GM12878 (cell line): ENCODE measurements at regions of chr17 and their contacts with region 1.

Region 1: DNA sequence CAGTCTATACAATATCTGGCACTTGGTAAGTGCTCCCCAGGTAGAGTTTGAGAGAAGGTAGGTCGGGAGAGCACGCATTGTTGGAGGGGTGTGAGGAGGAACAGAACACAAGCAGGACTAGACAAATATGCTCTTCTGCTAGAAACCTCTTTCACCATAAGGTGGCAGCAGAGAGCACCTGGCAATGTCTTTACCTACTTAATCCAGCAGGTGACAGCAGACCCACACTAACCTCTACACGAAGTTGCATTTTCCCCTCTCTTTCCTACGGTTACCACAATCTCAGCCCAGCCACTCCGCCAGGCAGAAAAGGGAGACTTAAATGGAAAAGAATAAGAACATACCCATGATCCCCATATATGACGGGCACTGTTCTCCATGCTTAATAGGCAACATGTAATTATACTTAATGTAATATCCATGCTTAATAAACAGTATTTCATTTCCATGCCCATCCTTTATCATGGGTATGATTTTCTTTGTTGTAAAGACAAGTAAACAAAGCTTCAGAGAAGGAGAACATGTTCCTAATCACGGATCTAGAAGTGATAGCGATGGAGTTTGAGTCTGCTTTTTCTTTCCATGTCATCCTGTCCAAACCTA is 55.1 kb upstream of the CCL2 start:
- DNase-seq: peak; percentile 36
- ATAC-seq: peak; percentile 91
- H3K4me3 ChIP-seq: no peak overlapping the region
- H3K27ac ChIP-seq: no peak overlapping the region
- H3K4me1 ChIP-seq: no peaks in the 10 kb centered on the region
- H3K27me3 ChIP-seq: no peaks in the 10 kb centered on the region; a peak in 1 of 4 replicates
- CTCF ChIP-seq: peak; percentile 100; a peak in 5 of 6 replicates
- EP300 ChIP-seq: no peak
- POLR2A ChIP-seq: no peak
- RAD21 ChIP-seq: peak; percentile 97

Region 2: GRCh38 chr17:33811004-33811760 is 388.9 kb before region 1 on chr17:
- CTCF ChIA-PET with region 1: no interaction called
- POLR2A ChIA-PET with region 1: no interaction called
- RAD21 ChIA-PET with region 1: no interaction called
- SMC1A ChIA-PET with region 1: no interaction called
- in situ Hi-C with region 1: no loop called
- intact Hi-C with region 1: no loop called
- DNase-seq: no peak
- ATAC-seq: no peak
- H3K4me3 ChIP-seq: no peak overlapping the region
- H3K27ac ChIP-seq: no peak overlapping the region
- H3K4me1 ChIP-seq: no peaks in the 10 kb centered on the region
- H3K27me3 ChIP-seq: no peaks in the 10 kb centered on the region
- CTCF ChIP-seq: no peak
- EP300 ChIP-seq: no peak
- POLR2A ChIP-seq: no peak
- RAD21 ChIP-seq: no peak

Region 3: GRCh38 chr17:34146440-34147043 is 53.5 kb before region 1 on chr17:
- CTCF ChIA-PET with region 1: no interaction called
- POLR2A ChIA-PET with region 1: no interaction called
- RAD21 ChIA-PET with region 1: no interaction called
- SMC1A ChIA-PET with region 1: no interaction called
- in situ Hi-C with region 1: no loop called
- intact Hi-C with region 1: no loop called
- DNase-seq: no peak
- ATAC-seq: peak; percentile 87
- H3K4me3 ChIP-seq: no peak overlapping the region
- H3K27ac ChIP-seq: no peak overlapping the region
- H3K4me1 ChIP-seq: no peaks in the 10 kb centered on the region
- H3K27me3 ChIP-seq: no peaks in the 10 kb centered on the region
- CTCF ChIP-seq: peak; percentile 85 to 87 (median 87); a peak in 5 of 6 replicates
- EP300 ChIP-seq: no peak
- POLR2A ChIP-seq: no peak
- RAD21 ChIP-seq: peak; percentile 88

Region 4: DNA sequence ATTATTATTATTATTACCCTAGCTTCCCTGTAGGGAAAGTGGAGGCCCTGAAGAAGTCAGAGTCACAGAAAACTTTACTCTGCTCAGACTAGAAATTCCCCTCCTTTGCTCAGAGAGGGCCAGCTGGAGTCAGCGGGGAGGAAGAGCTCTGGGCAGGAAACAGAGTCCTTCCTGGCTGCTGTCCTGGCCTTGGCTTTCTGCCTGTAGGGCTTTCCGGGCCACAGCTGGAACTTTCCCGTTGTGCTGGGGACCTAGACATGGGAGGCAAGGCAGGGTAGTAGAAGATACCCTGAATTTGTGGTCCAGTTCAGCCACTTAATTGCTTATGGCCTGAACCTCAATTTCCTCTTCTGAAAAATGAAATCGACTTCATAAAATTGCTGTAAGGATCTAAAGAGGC is 41.0 kb after region 1 on chr17:
- CTCF ChIA-PET with region 1: interaction called, 4 read pairs
- POLR2A ChIA-PET with region 1: no interaction called
- RAD21 ChIA-PET with region 1: no interaction called
- SMC1A ChIA-PET with region 1: no interaction called
- in situ Hi-C with region 1: no loop called
- intact Hi-C with region 1: loop called (anchors 5 kb)
- DNase-seq: no peak
- ATAC-seq: no peak; the same call in 2 of the 3 replicates
- H3K4me3 ChIP-seq: no peak overlapping the region
- H3K27ac ChIP-seq: no peak overlapping the region
- H3K4me1 ChIP-seq: peaks cover 23% of the 10 kb centered on the region
- H3K27me3 ChIP-seq: no peaks in the 10 kb centered on the region
- CTCF ChIP-seq: no peak
- EP300 ChIP-seq: no peak
- POLR2A ChIP-seq: no peak
- RAD21 ChIP-seq: no peak

Region 5: GRCh38 chr17:34354637-34355036 is 154.6 kb after region 1 on chr17:
- CTCF ChIA-PET with region 1: interaction called, 264 read pairs
- POLR2A ChIA-PET with region 1: no interaction called
- RAD21 ChIA-PET with region 1: interaction called, 83 read pairs
- SMC1A ChIA-PET with region 1: interaction called, 80 read pairs
- in situ Hi-C with region 1: no loop called
- intact Hi-C with region 1: no loop called
- DNase-seq: no peak
- ATAC-seq: no peak
- H3K4me3 ChIP-seq: no peak overlapping the region
- H3K27ac ChIP-seq: no peak overlapping the region
- H3K4me1 ChIP-seq: no peaks in the 10 kb centered on the region
- H3K27me3 ChIP-seq: peaks cover 0 to 5% of the 10 kb centered on the region in 2 experiments; a peak in 1 of 4 replicates
- CTCF ChIP-seq: no peak
- EP300 ChIP-seq: no peak
- POLR2A ChIP-seq: no peak
- RAD21 ChIP-seq: no peak

Region 6: GRCh38 chr17:34398990-34399389 is 199.0 kb after region 1 on chr17:
- CTCF ChIA-PET with region 1: interaction called, 10 read pairs
- POLR2A ChIA-PET with region 1: no interaction called
- RAD21 ChIA-PET with region 1: no interaction called
- SMC1A ChIA-PET with region 1: no interaction called
- in situ Hi-C with region 1: no loop called
- intact Hi-C with region 1: no loop called
- DNase-seq: no peak
- ATAC-seq: peak; percentile 70
- H3K4me3 ChIP-seq: no peak overlapping the region
- H3K27ac ChIP-seq: no peak overlapping the region
- H3K4me1 ChIP-seq: no peaks in the 10 kb centered on the region
- H3K27me3 ChIP-seq: peaks cover 0 to 3% of the 10 kb centered on the region in 2 experiments; a peak in 2 of 4 replicates
- CTCF ChIP-seq: no peak
- EP300 ChIP-seq: no peak
- POLR2A ChIP-seq: no peak
- RAD21 ChIP-seq: no peak

Region 7: DNA sequence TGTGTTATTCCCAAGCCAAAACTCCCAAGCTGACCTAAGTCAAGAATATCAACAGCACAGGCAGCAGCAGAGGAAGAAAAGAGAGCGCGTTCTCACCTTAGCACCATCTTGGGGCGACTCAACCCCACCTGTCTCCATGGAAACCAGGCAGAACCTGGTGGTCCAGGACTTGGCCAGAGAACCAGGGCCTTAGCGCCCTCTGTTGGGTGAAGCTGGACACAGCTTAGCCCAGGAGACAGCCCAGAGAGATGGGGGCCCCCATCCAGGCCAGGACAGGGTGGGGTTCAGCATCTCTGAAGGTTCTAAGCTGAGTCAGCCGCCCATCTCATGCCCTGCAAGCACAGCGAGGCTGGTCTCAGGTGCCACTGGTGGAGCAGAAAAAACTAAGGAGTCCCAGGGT is 319.2 kb after region 1 on chr17:
- CTCF ChIA-PET with region 1: no interaction called
- POLR2A ChIA-PET with region 1: no interaction called
- RAD21 ChIA-PET with region 1: no interaction called
- SMC1A ChIA-PET with region 1: no interaction called
- in situ Hi-C with region 1: no loop called
- intact Hi-C with region 1: loop called (anchors 1 kb)
- DNase-seq: no peak
- ATAC-seq: peak; percentile 61; the same call in 2 of the 3 replicates
- H3K4me3 ChIP-seq: no peak overlapping the region
- H3K27ac ChIP-seq: no peak overlapping the region
- H3K4me1 ChIP-seq: no peaks in the 10 kb centered on the region
- H3K27me3 ChIP-seq: no peaks in the 10 kb centered on the region; a peak in 1 of 4 replicates
- CTCF ChIP-seq: peak; percentile 47 to 69 (median 51)
- EP300 ChIP-seq: no peak
- POLR2A ChIP-seq: no peak
- RAD21 ChIP-seq: peak; percentile 36; the same call in 1 of the 2 replicates